ENCODE measurements at regions of chr11 and their contacts with region 1.

Region 1: DNA sequence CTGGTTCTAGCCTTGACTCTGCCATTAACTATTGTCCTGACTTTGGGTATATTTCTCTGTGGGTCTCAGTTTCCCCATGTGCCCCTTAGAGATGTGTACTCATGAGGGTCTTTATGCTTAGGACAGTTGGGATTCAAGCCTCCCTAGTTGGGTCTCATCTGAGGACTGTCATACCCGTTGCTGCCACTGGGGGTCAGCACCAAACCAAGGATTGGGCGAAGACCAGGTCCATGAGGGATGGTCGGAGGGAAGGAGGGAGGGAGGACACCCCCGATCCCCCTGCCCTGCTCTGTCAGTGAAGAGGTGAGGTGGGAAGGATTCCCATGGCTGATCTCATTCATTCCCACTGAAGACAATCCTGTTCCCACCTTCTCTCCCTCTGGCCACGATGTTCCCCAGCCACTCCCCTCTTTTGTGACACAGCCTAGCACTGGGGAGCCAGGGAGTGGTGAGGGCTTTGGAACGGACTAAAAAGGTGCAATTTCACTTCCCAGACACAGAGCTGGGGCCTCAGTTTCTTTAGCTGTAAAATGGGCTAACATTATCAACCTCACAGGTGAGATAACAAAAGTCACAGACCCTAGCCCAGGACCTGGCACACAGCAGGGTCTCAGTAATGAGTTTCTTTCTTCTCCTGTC is 12.4 kb upstream of the KLHL35 start:
- DNase-seq: peak; percentile 58 to 85 (median 68)
- ATAC-seq: peak; percentile 94
- H3K4me3 ChIP-seq: no peak overlapping the region
- H3K4me3 Mint-ChIP-seq: no peak overlapping the region
- H3K27ac ChIP-seq: no peak overlapping the region
- H3K27ac Mint-ChIP-seq: no peak overlapping the region
- H3K4me1 ChIP-seq: peaks cover 4% of the 10 kb centered on the region
- H3K4me1 Mint-ChIP-seq: no peaks in the 10 kb centered on the region
- H3K27me3 ChIP-seq: no peaks in the 10 kb centered on the region
- H3K27me3 Mint-ChIP-seq: no peaks in the 10 kb centered on the region
- CTCF ChIP-seq: peak; percentile 96

Region 2: GRCh38 chr11:75428281-75428724 is 17.1 kb before region 1 on chr11:
- CTCF ChIA-PET with region 1: no interaction called
- POLR2A ChIA-PET with region 1: no interaction called
- intact Hi-C with region 1: no loop called
- DNase-seq: peak; percentile 23 to 89 (median 50)
- ATAC-seq: peak; percentile 73
- H3K4me3 ChIP-seq: peak overlapping the region; percentile 33
- H3K4me3 Mint-ChIP-seq: peak overlapping the region; percentile 84
- H3K27ac ChIP-seq: no peak overlapping the region
- H3K27ac Mint-ChIP-seq: peak overlapping the region; percentile 77
- H3K4me1 ChIP-seq: peaks cover 30% of the 10 kb centered on the region
- H3K4me1 Mint-ChIP-seq: peaks cover 30% of the 10 kb centered on the region
- H3K27me3 ChIP-seq: peaks cover 32 to 36% of the 10 kb centered on the region in 2 experiments
- H3K27me3 Mint-ChIP-seq: peaks cover 50% of the 10 kb centered on the region
- CTCF ChIP-seq: no peak

Region 3: GRCh38 chr11:75532200-75533048 is 87.0 kb after region 1 on chr11:
- CTCF ChIA-PET with region 1: interaction called, 25 read pairs
- POLR2A ChIA-PET with region 1: interaction called, 6 read pairs
- intact Hi-C with region 1: loop called (anchors 1 kb)
- DNase-seq: peak; percentile 74 to 90 (median 82)
- ATAC-seq: peak; percentile 98
- H3K4me3 ChIP-seq: no peak overlapping the region
- H3K4me3 Mint-ChIP-seq: peak overlapping the region; percentile 26
- H3K27ac ChIP-seq: no peak overlapping the region
- H3K27ac Mint-ChIP-seq: no peak overlapping the region
- H3K4me1 ChIP-seq: peaks cover 29% of the 10 kb centered on the region
- H3K4me1 Mint-ChIP-seq: peaks cover 39% of the 10 kb centered on the region
- H3K27me3 ChIP-seq: no peaks in the 10 kb centered on the region
- H3K27me3 Mint-ChIP-seq: no peaks in the 10 kb centered on the region
- CTCF ChIP-seq: peak; percentile 96

Region 4: GRCh38 chr11:75577207-75577606 is 131.8 kb after region 1 on chr11:
- CTCF ChIA-PET with region 1: no interaction called
- POLR2A ChIA-PET with region 1: no interaction called
- intact Hi-C with region 1: loop called in 1 of 2 experiments (anchors 5 kb)
- DNase-seq: peak; percentile 50 to 78 (median 62)
- ATAC-seq: peak; percentile 54
- H3K4me3 ChIP-seq: no peak overlapping the region
- H3K4me3 Mint-ChIP-seq: no peak overlapping the region
- H3K27ac ChIP-seq: no peak overlapping the region
- H3K27ac Mint-ChIP-seq: no peak overlapping the region
- H3K4me1 ChIP-seq: peaks cover 3% of the 10 kb centered on the region
- H3K4me1 Mint-ChIP-seq: peaks cover 1% of the 10 kb centered on the region
- H3K27me3 ChIP-seq: no peaks in the 10 kb centered on the region
- H3K27me3 Mint-ChIP-seq: no peaks in the 10 kb centered on the region
- CTCF ChIP-seq: peak; percentile 70

Measured in CD4-positive, alpha-beta T cell (primary cell).